ENCODE measurements at regions of chr16 and their contacts with region 1.

Region 1: DNA sequence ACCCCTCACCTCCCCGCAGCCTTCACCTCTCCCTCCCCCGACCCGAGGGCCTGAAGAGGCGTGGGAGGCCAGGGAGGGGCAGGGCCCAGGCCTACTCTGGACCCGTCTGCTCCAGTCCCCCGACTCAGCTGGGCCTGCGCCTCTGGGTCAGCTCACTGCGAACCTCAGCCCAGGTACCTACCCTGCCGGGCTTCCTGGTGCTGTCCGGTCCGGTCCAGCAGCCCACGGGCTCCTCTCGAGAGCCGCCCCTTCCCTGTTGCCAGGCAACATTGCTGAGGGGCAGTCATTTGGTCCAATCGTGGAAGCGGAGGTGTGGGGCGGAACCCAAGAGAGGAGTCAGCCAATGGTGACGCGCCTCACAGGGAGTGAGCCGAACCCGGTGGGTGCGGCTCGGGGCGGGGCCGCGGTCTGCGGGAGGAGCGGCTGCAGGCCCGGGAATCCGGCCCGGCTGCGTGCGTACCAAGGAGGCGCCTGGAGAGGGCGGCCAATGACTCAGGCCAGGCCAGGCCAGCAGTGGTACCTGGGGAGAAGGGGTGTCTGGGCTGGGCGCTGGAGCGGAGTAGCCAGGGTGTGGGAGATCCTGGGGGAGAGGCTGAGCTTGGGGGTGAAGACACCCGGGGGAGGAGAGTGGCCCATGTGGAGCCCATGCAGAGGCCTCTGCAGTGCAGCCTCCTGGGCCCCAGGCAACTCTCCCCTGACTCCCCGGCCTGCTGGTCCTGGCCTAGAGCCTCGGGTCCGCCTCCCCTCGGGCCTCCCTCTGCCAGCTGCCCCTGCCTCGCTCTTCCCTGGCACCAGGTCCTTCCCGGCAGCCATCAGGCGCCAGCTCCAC is at the start of gene MEAK7:
- DNase-seq: peak; percentile 99
- H3K4me3 Mint-ChIP-seq: peak within 1 kb of the TSS; percentile 94
- H3K27ac Mint-ChIP-seq: peak within 1 kb of the TSS; percentile 82
- H3K4me1 Mint-ChIP-seq: peaks cover 41% of the 10 kb centered on the region
- H3K27me3 Mint-ChIP-seq: no peaks in the 10 kb centered on the region
- total RNA-seq, gene MEAK7: 6.3 to 7.0 TPM

Region 2: DNA sequence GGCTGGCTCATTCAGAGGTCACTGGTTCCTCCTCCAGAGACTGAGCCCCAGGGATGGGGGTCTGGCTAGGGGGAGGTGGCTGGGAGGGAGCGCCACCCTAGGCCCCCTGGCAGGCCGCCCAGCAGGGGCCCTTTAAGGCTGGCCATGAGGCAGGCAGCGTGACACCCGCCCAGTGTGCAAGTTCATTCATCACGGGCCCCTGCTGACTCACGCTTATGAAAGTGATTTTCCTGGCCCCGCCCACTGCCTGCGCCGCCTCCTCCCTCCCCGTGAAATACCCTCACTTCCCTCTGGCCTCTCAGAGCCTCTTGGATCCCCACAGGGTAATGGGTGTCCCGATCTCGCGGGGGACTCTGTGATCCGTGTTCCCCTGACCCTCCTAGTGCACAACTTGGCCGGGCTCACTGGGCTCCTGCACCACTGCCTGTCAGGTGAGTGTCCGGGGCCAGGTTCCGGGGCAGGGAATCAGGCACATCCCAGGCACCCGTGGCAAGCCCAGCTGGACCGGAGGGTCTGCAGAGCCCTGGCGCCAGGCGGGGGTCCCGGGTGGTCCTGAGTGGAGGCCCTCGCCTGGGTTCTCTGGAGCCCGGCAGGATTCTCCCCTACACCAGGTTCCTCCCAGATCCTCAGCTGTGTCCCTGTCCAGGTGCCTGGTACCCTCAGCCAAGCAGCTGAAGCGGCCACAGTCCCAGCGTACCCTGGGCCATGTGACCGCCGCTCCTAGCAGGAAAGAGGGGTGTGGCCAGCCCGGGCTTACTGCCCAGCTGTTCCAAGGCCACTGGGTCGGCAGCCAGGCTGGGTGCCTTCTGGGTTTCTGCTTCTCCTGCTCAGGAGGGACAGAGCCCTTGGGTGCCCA is 551.5 kb before region 1 on chr16 and contains the start of gene OSGIN1:
- CTCF ChIA-PET with region 1: no interaction called
- intact Hi-C with region 1: loop called (anchors 2 kb)
- DNase-seq: peak; percentile 95
- H3K4me3 Mint-ChIP-seq: peak within 1 kb of the TSS; percentile 62
- H3K27ac Mint-ChIP-seq: no peak within 1 kb of the TSS
- H3K4me1 Mint-ChIP-seq: peaks cover 16% of the 10 kb centered on the region
- H3K27me3 Mint-ChIP-seq: peaks cover 28% of the 10 kb centered on the region
- total RNA-seq, gene OSGIN1: 0.47 to 0.86 TPM

Region 3: GRCh38 chr16:83992624-83993023 is 512.0 kb before region 1 on chr16:
- CTCF ChIA-PET with region 1: no interaction called
- intact Hi-C with region 1: no loop called
- DNase-seq: no peak
- H3K4me3 Mint-ChIP-seq: no peak overlapping the region
- H3K27ac Mint-ChIP-seq: no peak overlapping the region
- H3K4me1 Mint-ChIP-seq: no peaks in the 10 kb centered on the region
- H3K27me3 Mint-ChIP-seq: peaks cover 43% of the 10 kb centered on the region

Region 4: DNA sequence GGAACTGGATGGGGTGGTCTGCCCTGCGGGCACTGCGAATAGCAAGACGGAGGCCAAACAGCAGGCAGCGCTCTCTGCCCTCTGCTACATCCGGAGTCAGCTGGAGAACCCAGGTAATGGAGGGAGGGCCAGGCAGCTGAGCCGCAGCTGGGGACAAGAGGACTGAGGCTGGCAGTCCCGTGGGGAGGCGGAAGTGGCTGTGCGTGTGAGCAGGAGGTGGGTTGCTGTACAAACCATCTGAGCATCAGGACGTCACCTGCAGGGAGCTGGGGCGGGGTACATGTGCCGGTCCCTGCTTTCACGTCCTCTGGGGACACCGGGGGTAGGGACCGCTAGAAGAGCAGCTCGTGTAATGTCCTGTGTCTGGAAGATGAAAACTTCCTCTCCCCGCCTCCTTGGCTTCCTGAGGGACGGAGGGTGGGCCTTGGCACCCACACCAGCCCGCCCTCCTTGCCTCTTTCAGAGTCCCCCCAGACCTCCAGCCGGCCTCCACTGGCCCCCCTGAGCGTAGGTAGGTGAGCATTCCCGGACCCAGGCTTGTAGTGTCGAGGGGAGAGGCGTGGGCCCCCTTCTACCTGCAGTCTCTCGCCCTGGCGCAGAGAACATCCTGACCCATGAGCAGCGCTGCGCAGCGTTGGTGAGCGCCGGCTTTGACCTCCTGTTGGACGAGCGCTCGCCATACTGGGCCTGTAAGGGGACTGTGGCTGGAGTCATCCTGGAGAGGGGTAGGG is 310.0 kb before region 1 on chr16:
- CTCF ChIA-PET with region 1: no interaction called
- intact Hi-C with region 1: loop called (anchors 2 kb)
- DNase-seq: peak; percentile 71
- H3K4me3 Mint-ChIP-seq: peak overlapping the region; percentile 54
- H3K27ac Mint-ChIP-seq: no peak overlapping the region
- H3K4me1 Mint-ChIP-seq: peaks cover 17% of the 10 kb centered on the region
- H3K27me3 Mint-ChIP-seq: no peaks in the 10 kb centered on the region

Region 5: GRCh38 chr16:84277237-84277823 is 227.3 kb before region 1 on chr16:
- CTCF ChIA-PET with region 1: interaction called, 37 read pairs
- intact Hi-C with region 1: loop called (anchors 1 kb)
- DNase-seq: peak; percentile 86
- H3K4me3 Mint-ChIP-seq: no peak overlapping the region
- H3K27ac Mint-ChIP-seq: no peak overlapping the region
- H3K4me1 Mint-ChIP-seq: no peaks in the 10 kb centered on the region
- H3K27me3 Mint-ChIP-seq: no peaks in the 10 kb centered on the region

Region 6: DNA sequence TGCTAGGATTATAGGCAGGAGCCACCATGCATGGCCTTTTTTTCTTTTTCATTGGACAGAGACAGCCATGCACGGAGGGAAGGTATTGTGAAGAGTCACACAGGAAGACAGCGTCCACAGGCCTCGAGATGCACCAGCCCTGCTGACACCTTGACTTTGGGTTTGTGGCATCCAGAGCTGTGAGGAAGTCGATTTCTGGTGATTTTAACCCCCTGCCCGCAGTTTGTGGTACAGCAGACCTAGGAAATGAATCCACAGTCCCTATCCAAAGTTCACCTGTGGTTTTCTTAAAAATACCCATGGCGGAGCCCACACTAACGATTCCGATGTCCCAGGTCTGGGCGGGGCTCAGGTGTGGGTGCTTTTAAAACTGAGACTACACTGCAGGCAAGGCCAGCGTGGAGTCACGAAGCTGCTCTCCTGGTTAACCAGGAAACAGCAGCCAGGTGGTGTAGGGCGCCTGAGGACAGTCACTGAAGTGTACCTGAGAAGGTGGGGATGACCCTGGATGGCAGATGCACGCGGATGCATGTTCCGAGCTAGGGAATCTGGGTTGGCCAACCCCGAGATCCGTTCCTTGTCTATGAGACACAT is 14.2 kb after region 1 on chr16:
- CTCF ChIA-PET with region 1: interaction called, 12 read pairs
- intact Hi-C with region 1: loop called (anchors 1 kb)
- DNase-seq: peak; percentile 73
- H3K4me3 Mint-ChIP-seq: no peak overlapping the region
- H3K27ac Mint-ChIP-seq: peak overlapping the region; percentile 30
- H3K4me1 Mint-ChIP-seq: peaks cover 60% of the 10 kb centered on the region
- H3K27me3 Mint-ChIP-seq: no peaks in the 10 kb centered on the region

Region 7: DNA sequence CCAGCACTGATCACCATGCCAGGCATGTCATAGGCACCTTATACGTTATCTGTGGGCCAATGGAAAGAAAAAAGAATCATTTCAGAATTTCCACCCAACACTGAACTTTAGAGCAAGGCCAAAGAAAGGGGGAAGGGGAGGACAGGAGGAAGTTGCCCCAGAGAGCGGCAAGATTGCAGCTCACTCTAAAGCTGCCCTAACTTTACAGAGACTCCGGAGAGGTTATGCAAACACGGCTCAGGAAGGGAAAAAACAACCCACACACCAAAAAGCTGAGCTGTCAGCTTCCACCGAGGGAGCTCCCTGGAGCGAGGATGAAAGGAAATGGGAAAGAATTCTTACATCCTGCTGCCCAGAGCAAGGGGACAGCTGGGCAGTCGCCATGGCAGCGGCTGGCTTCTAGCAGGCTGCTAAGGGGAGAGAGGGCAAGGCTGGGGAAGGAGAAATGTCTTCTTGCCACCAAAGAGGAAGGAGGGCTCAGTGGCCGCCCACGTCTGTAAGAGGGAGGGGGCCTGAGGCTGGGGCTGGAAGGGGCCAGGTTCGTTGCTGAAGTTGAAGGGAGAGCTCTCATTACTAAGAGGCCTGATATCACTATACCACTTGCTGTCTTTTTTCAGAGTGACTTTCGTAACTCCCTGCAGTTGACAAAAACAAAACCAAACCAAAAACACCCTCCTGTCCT is 95.0 kb after region 1 on chr16:
- CTCF ChIA-PET with region 1: interaction called, 12 read pairs
- intact Hi-C with region 1: no loop called
- DNase-seq: peak; percentile 83
- H3K4me3 Mint-ChIP-seq: peak overlapping the region; percentile 75
- H3K27ac Mint-ChIP-seq: peak overlapping the region; percentile 90
- H3K4me1 Mint-ChIP-seq: peaks cover 91% of the 10 kb centered on the region
- H3K27me3 Mint-ChIP-seq: no peaks in the 10 kb centered on the region

Region 8: DNA sequence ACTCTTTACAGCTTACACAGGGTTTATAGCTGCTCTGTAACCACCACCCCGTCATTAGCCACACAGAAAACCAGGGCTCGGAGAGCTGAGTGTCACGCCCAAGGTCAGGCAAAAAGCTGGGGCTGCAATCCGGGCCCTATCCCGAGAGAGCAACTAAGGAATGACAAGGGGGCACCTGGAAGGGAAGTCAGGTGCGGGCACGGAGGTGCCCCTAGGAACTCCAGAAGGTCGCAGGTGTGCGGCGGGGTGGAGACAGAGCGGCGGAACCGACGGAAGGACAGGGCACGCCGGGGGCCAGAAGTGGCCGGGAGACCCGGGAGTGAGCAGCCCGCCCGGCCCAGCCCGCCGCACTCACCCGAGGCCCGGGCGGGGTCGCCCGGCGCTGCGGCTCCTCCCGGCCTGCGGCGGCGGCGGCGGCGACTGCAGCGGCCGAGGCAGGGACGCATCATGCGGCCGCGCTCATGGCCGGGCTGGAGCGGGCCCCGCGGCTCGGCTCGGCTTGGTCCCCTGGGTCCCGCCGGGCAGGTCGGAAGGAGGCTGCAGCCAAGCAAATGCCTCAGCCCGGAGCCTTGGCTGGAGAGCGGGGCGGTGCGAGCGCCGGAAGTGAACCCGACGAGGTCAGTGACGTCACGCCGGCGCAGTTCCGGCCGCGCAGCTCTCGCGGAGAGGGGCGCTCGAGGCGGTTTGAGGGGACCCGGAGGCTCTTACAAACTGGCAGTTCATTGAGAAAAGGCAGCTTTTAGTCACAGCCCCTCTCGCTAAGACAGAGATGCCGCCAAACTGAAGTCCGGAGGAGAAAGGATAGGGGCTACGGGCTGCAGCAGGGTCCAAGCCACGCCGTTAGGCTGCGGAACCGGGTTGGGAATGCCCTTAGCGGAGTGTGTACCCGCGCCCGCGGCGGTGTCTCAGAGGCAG is 506.6 kb after region 1 on chr16 and contains the start of gene ZDHHC7:
- CTCF ChIA-PET with region 1: no interaction called
- intact Hi-C with region 1: loop called (anchors 5 kb)
- DNase-seq: peak; percentile 87
- H3K4me3 Mint-ChIP-seq: peak within 1 kb of the TSS; percentile 98
- H3K27ac Mint-ChIP-seq: peak within 1 kb of the TSS; percentile 98
- H3K4me1 Mint-ChIP-seq: peaks cover 31% of the 10 kb centered on the region
- H3K27me3 Mint-ChIP-seq: no peaks in the 10 kb centered on the region
- total RNA-seq, gene ZDHHC7: 16.6 to 17.9 TPM

Measured in activated naive CD4-positive, alpha-beta T cell treated with anti-CD3 and anti-CD28 coated beads for 36 hours (primary cell).